Left cardiac atrium (tissue), 4 donors: ENCODE measurements at regions of chr10 and their contacts with region 1.

Region 1: DNA sequence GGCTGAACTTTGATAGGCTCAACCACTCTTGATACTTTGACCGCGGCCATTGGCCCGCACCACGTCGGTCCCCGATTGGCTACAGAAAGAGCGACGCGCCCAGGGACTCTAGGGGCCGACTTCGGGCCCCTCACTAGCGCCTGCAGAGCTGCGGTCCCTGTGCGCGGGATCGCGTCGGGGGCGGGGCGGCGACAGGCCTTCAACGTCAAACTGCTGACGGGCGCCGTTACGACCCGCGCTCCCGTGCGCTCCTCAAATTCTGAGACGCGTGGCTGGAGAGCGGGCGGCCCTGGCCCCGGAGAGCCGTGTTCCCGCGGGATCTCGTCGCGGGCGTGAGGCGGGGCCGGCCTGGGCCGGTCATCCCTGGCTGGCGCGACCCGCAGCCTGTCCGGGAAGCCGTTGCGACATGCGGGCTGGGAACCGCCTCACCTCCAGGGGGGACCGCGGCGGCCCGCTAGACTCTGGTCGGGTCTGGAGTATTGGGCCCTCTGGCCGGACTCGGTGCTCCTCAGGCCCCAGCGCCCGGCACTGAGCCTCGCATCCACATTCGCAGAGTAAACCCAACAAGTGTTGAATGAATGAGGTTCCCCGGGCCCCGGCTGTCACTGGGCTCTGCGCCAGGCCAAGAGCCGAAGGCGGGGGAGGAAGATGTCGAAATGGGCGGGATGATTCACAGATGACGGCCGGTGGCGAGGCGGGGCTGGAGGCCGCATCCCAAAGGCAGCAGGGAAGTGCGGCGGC is 644 bp upstream of the SLC25A28 start:
- DNase-seq: peak; percentile 96
- ATAC-seq: peak; percentile 93 to 95

Region 2: GRCh38 chr10:99303899-99304861 is 316.7 kb before region 1 on chr10:
- intact Hi-C with region 1: no loop called
- DNase-seq: no peak
- ATAC-seq: no peak

Region 3: GRCh38 chr10:99659031-99659867 is 38.4 kb after region 1 on chr10 and contains the start of gene ENTPD7:
- intact Hi-C with region 1: loop called in 1 of 2 experiments (anchors 5 kb)
- DNase-seq: peak; percentile 97
- ATAC-seq: peak; percentile 100
- total RNA-seq, gene ENTPD7: 3.0 to 6.2 TPM